CD8-positive, alpha-beta T cell (primary cell): ENCODE measurements at regions of chr12 and their contacts with region 1.

Region 1: DNA sequence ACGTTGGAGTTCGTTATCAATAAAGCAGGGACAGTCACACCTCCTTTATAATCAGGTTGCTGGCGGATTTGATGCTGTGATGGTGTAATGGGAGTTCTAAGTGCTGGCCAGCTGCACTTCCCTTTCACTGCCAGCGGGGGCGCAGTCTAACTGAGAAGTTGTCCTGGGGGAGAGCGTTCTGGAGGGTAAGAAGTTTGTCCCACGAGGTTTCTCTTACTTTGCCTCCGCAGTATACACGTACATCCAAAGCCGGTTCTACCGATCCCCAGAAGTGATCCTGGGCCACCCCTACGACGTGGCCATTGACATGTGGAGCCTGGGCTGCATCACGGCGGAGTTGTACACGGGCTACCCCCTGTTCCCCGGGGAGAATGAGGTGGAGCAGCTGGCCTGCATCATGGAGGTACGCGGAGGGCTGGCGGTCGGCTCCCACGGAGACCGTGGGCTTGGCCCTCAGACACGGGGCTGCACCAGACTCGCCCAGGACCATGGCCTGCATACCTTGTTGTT is 42.7 kb downstream of the DYRK4 start:
- DNase-seq: peak; percentile 59 to 86 (median 78)
- ATAC-seq: peak; percentile 99
- H3K4me3 ChIP-seq: peak overlapping the region; percentile 62 to 78
- H3K4me3 Mint-ChIP-seq: peak overlapping the region; percentile 99
- H3K27ac ChIP-seq: peak overlapping the region; percentile 28 to 50
- H3K27ac Mint-ChIP-seq: peak overlapping the region; percentile 94
- H3K4me1 ChIP-seq: peaks cover 7% of the 10 kb centered on the region
- H3K4me1 Mint-ChIP-seq: peaks cover 31% of the 10 kb centered on the region
- H3K27me3 ChIP-seq: no peaks in the 10 kb centered on the region
- H3K27me3 Mint-ChIP-seq: peaks cover 3% of the 10 kb centered on the region
- CTCF ChIP-seq: peak; percentile 97

Region 2: DNA sequence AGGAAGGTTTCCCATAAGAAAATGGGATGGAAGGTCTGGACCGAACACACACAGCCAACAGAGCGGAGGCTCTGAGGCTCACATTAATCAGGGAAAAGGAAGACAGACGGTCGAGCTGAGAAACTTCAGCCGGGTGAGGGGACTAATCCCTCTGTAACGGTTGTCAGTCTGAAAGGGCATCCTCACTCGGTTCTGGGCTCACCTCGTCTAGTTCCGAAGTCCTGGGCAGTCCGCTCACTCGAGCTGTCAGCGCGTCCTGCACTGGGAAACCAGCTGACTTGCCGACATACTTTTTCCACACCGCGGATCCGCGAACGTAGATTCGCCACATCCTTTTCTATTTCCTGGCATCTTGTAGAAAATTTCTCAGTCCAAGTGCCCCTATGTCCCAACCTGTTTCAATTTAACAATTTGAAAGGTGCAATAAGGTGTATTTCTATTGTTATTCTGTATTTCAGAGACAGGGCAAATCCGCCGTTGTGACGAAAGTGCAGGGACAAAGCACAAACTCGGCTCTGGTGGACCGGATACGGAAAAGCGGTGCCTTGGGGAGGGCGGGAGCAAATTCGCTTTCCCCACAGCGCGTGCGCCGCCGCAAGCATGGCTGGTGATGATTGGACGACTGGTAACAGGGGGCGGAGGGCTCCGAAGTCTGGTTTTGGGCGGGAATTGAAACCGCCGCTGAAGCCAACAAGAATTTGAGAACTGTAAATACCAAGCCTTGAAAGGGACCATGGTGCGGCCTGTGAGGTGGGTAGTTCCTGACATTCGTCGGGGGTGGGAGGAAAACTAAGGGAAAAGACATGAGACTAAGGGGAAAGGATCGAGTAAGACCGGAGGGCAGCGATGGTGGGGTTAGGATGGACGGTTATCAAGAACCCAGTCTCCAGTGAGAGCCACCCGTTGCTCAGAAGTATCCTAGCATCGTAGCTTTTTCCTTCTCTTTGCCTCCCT is 66.3 kb before region 1 on chr12 and contains the start of gene RAD51AP1:
- CTCF ChIA-PET with region 1: no interaction called
- POLR2A ChIA-PET with region 1: no interaction called
- intact Hi-C with region 1: loop called in 1 of 2 experiments (anchors 2 kb)
- DNase-seq: peak; percentile 89 to 98 (median 94)
- ATAC-seq: peak; percentile 99
- H3K4me3 ChIP-seq: peak within 1 kb of the TSS; percentile 68 to 97
- H3K4me3 Mint-ChIP-seq: peak within 1 kb of the TSS; percentile 98
- H3K27ac ChIP-seq: peak within 1 kb of the TSS; percentile 85 to 97
- H3K27ac Mint-ChIP-seq: peak within 1 kb of the TSS; percentile 98
- H3K4me1 ChIP-seq: peaks cover 7% of the 10 kb centered on the region
- H3K4me1 Mint-ChIP-seq: peaks cover 26% of the 10 kb centered on the region
- H3K27me3 ChIP-seq: no peaks in the 10 kb centered on the region
- H3K27me3 Mint-ChIP-seq: no peaks in the 10 kb centered on the region
- CTCF ChIP-seq: no peak
- total RNA-seq, gene RAD51AP1: 0.87 to 1.6 TPM

Region 3: GRCh38 chr12:4591180-4591687 is 13.5 kb before region 1 on chr12:
- CTCF ChIA-PET with region 1: interaction called, 18 read pairs
- POLR2A ChIA-PET with region 1: no interaction called
- intact Hi-C with region 1: no loop called
- DNase-seq: no peak
- ATAC-seq: no peak
- H3K4me3 ChIP-seq: no peak overlapping the region
- H3K4me3 Mint-ChIP-seq: no peak overlapping the region
- H3K27ac ChIP-seq: no peak overlapping the region
- H3K27ac Mint-ChIP-seq: no peak overlapping the region
- H3K4me1 ChIP-seq: no peaks in the 10 kb centered on the region
- H3K4me1 Mint-ChIP-seq: no peaks in the 10 kb centered on the region
- H3K27me3 ChIP-seq: no peaks in the 10 kb centered on the region
- H3K27me3 Mint-ChIP-seq: peaks cover 7% of the 10 kb centered on the region
- CTCF ChIP-seq: no peak

Region 4: GRCh38 chr12:4648501-4649357 is 44.0 kb after region 1 on chr12 and contains the starts of genes AKAP3 and NDUFA9:
- CTCF ChIA-PET with region 1: interaction called, 4 read pairs
- POLR2A ChIA-PET with region 1: interaction called, 4 read pairs
- intact Hi-C with region 1: loop called (anchors 2 kb)
- DNase-seq: peak; percentile 58 to 90 (median 82)
- ATAC-seq: peak; percentile 96
- H3K4me3 ChIP-seq: peak within 1 kb of the TSS; percentile 68 to 92
- H3K4me3 Mint-ChIP-seq: peak within 1 kb of the TSS; percentile 90
- H3K27ac ChIP-seq: peak within 1 kb of the TSS; percentile 62 to 77
- H3K27ac Mint-ChIP-seq: peak within 1 kb of the TSS; percentile 93
- H3K4me1 ChIP-seq: peaks cover 22% of the 10 kb centered on the region
- H3K4me1 Mint-ChIP-seq: peaks cover 51% of the 10 kb centered on the region
- H3K27me3 ChIP-seq: no peaks in the 10 kb centered on the region
- H3K27me3 Mint-ChIP-seq: no peaks in the 10 kb centered on the region
- CTCF ChIP-seq: no peak
- total RNA-seq, gene AKAP3: 1.1 to 1.3 TPM
- total RNA-seq, gene NDUFA9: 94.2 to 95.2 TPM

Region 5: GRCh38 chr12:4763549-4763948 is 158.8 kb after region 1 on chr12:
- CTCF ChIA-PET with region 1: interaction called, 3 read pairs
- POLR2A ChIA-PET with region 1: no interaction called
- intact Hi-C with region 1: loop called in 1 of 2 experiments (anchors 1 kb)
- DNase-seq: peak in 3 of 9 experiments; percentile 3 to 24 (median 17)
- ATAC-seq: no peak
- H3K4me3 ChIP-seq: no peak overlapping the region
- H3K4me3 Mint-ChIP-seq: no peak overlapping the region
- H3K27ac ChIP-seq: no peak overlapping the region
- H3K27ac Mint-ChIP-seq: no peak overlapping the region
- H3K4me1 ChIP-seq: no peaks in the 10 kb centered on the region
- H3K4me1 Mint-ChIP-seq: peaks cover 3% of the 10 kb centered on the region
- H3K27me3 ChIP-seq: no peaks in the 10 kb centered on the region
- H3K27me3 Mint-ChIP-seq: peaks cover 4% of the 10 kb centered on the region
- CTCF ChIP-seq: no peak

Region 6: GRCh38 chr12:5480218-5480937 is 875.6 kb after region 1 on chr12:
- CTCF ChIA-PET with region 1: no interaction called
- POLR2A ChIA-PET with region 1: no interaction called
- intact Hi-C with region 1: no loop called
- DNase-seq: no peak
- ATAC-seq: no peak
- H3K4me3 ChIP-seq: no peak overlapping the region
- H3K4me3 Mint-ChIP-seq: no peak overlapping the region
- H3K27ac ChIP-seq: no peak overlapping the region
- H3K27ac Mint-ChIP-seq: no peak overlapping the region
- H3K4me1 ChIP-seq: no peaks in the 10 kb centered on the region
- H3K4me1 Mint-ChIP-seq: no peaks in the 10 kb centered on the region
- H3K27me3 ChIP-seq: no peaks in the 10 kb centered on the region
- H3K27me3 Mint-ChIP-seq: peaks cover 5% of the 10 kb centered on the region
- CTCF ChIP-seq: no peak